PC-9 (cell line): ENCODE measurements at regions of chr10 and their contacts with region 1.

Region 1: DNA sequence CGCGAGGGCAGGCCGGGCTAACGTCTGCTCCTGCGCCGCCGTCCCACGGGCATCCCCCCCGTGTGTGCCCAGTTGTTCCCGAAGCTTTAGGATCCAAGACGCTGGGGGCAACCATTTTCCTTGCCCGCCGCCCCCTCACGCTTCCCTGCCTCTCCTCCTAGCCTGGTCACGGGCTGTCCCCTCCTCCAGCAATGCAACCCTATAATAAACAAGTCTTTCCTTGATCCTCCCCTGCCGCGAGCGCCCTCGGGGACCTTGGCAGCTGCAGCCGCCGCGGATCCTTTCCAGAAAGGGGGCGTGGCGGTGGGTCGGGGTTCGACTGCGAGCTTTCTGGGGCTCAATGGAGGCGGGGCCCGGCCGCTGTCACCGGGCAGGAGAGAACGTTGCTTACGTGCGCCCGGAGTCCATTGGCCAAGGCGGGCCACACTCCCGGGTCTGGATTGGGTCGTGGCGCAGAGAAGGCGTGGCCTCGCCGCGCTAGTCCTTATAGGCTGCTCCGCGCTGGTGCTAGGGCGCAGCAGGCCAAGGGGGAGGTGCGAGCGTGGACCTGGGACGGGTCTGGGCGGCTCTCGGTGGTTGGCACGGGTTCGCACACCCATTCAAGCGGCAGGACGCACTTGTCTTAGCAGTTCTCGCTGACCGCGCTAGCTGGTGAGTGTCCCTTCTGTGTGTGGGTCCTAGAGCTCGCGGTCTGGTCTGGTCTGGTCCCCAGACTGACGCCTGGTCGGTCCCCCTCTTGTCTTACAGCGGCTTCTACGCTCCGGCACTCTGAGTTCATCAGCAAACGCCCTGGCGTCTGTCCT is at the start of gene DDIT4:
- DNase-seq: peak; percentile 99 to 100
- H3K4me3 ChIP-seq: peak within 1 kb of the TSS; percentile 88
- H3K27ac ChIP-seq: peak within 1 kb of the TSS; percentile 99
- H3K4me1 ChIP-seq: peaks cover 46% of the 10 kb centered on the region
- H3K27me3 ChIP-seq: no peaks in the 10 kb centered on the region
- CTCF ChIP-seq: no peak
- total RNA-seq, gene DDIT4: 178 and 212 TPM in 2 replicates

Region 2: GRCh38 chr10:71582019-71582418 is 691.6 kb before region 1 on chr10:
- CTCF ChIA-PET with region 1: no interaction called
- POLR2A ChIA-PET with region 1: no interaction called
- intact Hi-C with region 1: no loop called
- DNase-seq: peak in 1 of 2 experiments; percentile 45
- H3K4me3 ChIP-seq: no peak overlapping the region
- H3K27ac ChIP-seq: no peak overlapping the region
- H3K4me1 ChIP-seq: no peaks in the 10 kb centered on the region
- H3K27me3 ChIP-seq: no peaks in the 10 kb centered on the region
- CTCF ChIP-seq: no peak

Region 3: DNA sequence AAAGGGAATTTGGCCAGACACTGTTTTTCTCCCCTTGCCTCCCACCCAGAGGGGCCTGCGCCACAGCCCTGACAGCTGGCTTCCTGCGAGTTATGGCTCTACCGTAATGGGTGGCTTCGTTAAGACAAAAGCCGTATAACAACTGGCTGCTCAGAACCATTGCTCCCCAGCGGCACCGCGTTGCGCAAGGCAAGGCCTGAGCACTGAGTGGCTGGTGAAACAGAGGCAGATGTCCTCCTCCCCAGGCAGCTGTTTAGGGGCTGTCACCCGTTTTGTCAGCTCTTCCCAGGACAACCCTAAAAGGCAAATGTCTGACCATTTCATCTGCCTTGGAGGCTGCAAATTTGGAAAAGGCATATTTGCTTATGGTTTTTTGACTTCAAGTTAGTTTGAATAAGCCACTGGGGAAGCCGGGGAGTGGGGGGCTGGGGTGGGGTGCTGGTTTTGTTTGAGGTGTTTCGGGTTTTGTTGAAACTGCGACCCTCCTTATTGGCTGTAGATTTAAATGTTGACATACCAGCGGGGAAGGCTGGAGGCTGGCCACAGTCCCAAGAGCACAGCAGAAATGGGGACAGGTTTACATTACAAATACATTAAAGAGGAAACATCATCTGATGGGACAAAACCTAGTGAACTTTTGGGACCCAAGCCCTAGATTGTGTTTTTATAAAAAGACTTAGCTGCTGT is 184.6 kb before region 1 on chr10:
- CTCF ChIA-PET with region 1: no interaction called
- POLR2A ChIA-PET with region 1: interaction called, 30 read pairs
- intact Hi-C with region 1: no loop called
- DNase-seq: peak in 1 of 2 experiments; percentile 1
- H3K4me3 ChIP-seq: no peak overlapping the region
- H3K27ac ChIP-seq: no peak overlapping the region
- H3K4me1 ChIP-seq: peaks cover 27% of the 10 kb centered on the region
- H3K27me3 ChIP-seq: no peaks in the 10 kb centered on the region
- CTCF ChIP-seq: no peak

Region 4: GRCh38 chr10:72173635-72174296 is 99.8 kb before region 1 on chr10:
- CTCF ChIA-PET with region 1: no interaction called
- POLR2A ChIA-PET with region 1: no interaction called
- intact Hi-C with region 1: loop called (anchors 2 kb)
- DNase-seq: peak in 1 of 2 experiments; percentile 48
- H3K4me3 ChIP-seq: no peak overlapping the region
- H3K27ac ChIP-seq: peak overlapping the region; percentile 43
- H3K4me1 ChIP-seq: peaks cover 61% of the 10 kb centered on the region
- H3K27me3 ChIP-seq: no peaks in the 10 kb centered on the region
- CTCF ChIP-seq: no peak

Region 5: DNA sequence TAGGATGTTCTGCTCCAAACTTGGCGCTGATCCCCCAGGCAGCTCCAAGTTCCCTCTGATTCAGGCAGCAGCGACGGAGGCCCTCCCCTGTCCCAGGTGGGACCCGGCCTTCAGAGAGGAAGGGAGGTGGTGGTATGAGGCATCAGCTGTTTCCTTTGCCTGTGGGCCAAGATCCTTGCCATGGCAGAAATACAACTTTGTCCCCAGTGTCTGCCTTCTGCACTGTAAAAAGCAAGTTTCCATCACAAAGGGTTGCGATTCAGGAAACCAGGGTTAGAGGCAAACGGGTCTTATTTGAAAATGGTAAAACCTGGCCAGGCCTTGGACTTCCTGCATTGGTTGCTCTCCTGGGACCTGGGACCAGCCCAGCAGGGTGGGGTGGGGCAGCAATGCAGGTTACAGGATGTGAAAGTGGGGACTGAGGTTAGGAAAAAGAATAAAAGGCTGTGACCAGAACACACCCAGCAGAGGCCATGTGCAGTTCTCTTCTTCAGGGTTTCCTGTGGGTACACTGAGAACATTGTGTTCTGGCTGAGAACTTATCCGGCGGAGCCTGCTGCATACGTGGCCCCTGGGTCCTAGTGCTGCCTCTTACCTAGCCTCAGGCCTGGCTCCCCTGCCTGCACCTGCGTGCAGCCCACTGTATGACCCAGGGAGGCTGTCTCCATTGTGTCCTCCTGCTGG is 25.0 kb before region 1 on chr10:
- CTCF ChIA-PET with region 1: no interaction called
- POLR2A ChIA-PET with region 1: interaction called, 5 read pairs
- intact Hi-C with region 1: loop called (anchors 1 kb)
- DNase-seq: peak; percentile 52 to 79
- H3K4me3 ChIP-seq: no peak overlapping the region
- H3K27ac ChIP-seq: peak overlapping the region; percentile 48
- H3K4me1 ChIP-seq: peaks cover 53% of the 10 kb centered on the region
- H3K27me3 ChIP-seq: no peaks in the 10 kb centered on the region
- CTCF ChIP-seq: no peak

Region 6: GRCh38 chr10:72292223-72292691 is 18.6 kb after region 1 on chr10:
- CTCF ChIA-PET with region 1: interaction called, 3 read pairs
- POLR2A ChIA-PET with region 1: interaction called, 14 read pairs
- intact Hi-C with region 1: loop called (anchors 1 kb)
- DNase-seq: peak; percentile 91 to 99
- H3K4me3 ChIP-seq: peak overlapping the region; percentile 8; the same call in 1 of the 2 replicates
- H3K27ac ChIP-seq: peak overlapping the region; percentile 93
- H3K4me1 ChIP-seq: peaks cover 54% of the 10 kb centered on the region
- H3K27me3 ChIP-seq: no peaks in the 10 kb centered on the region
- CTCF ChIP-seq: no peak